ENCODE measurements at regions of chr1 and their contacts with region 1.

Region 1: GRCh38 chr1:112619520-112620376 is at the start of gene CAPZA1:
- DNase-seq: peak; percentile 98
- H3K4me3 ChIP-seq: peak within 1 kb of the TSS; percentile 72 to 92 (median 82)
- H3K27ac ChIP-seq: peak within 1 kb of the TSS; percentile 96 to 100 (median 99)
- H3K4me1 ChIP-seq: peaks cover 40 to 70% (median 60%) of the 10 kb centered on the region in 6 donors
- H3K27me3 ChIP-seq: no peaks in the 10 kb centered on the region
- CTCF ChIP-seq: peak in 1 of 11 experiments; percentile 3
- POLR2A ChIP-seq: peak; percentile 40 to 58 (median 55)
- total RNA-seq, gene CAPZA1: 190 to 354 (median 259) TPM

Region 2: DNA sequence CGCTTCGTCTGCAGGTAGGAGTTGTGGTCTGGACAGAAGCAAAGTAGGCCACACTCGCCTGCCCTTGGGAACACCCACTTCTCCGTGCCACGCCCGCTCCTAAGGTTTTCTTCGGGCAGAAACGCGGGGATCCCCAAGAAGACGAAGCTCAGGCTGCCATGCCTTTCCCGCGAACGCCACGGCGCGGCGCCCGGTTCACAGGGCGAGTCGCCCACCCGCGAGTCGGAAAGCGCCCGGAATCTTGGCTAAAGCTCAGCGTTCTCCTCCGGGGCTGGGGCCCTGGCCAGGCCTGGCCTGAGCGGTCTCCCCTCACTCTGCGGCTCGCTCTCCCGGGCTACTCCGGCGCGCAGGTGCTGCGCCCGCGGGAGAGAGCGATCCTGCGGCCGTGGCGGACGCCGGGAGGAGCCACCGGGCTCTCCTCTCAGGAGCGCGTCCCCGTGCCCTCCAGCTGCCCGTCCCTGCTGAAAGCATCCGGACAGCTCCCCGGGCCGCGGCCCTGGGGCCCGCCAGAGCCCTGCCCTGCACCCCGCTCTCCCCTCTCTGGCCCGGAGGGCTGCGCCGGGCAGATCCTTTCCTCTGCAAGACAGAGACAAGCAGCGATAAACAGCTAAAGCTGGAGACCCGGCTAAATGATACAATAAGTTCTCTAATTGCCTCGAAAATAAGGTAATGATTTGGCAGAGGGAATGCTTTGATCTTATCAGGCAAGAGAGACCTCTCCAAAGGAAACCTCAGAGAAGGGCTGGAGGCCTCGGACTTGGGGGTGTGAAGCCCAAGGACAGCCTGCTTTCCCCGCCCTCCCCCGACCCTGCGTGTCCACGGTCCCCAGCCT is 117.7 kb before region 1 on chr1:
- intact Hi-C with region 1: no loop called
- DNase-seq: peak; percentile 88
- H3K4me3 ChIP-seq: peak overlapping the region; percentile 36 to 74 (median 48)
- H3K27ac ChIP-seq: peak overlapping the region in 1 of 8 donors; percentile 14
- H3K4me1 ChIP-seq: peaks cover 0 to 18% (median 15%) of the 10 kb centered on the region in 6 donors
- H3K27me3 ChIP-seq: peaks cover 0 to 88% (median 20%) of the 10 kb centered on the region in 7 donors
- CTCF ChIP-seq: peak; percentile 30 to 73 (median 59)
- POLR2A ChIP-seq: no peak

Region 3: GRCh38 chr1:112674439-112674985 is 54.8 kb after region 1 on chr1 and contains the start of gene MOV10:
- intact Hi-C with region 1: loop called (anchors 10 kb)
- DNase-seq: peak; percentile 92
- H3K4me3 ChIP-seq: peak within 1 kb of the TSS; percentile 73 to 95 (median 80)
- H3K27ac ChIP-seq: peak within 1 kb of the TSS; percentile 79 to 94 (median 92)
- H3K4me1 ChIP-seq: peaks cover 18 to 60% (median 42%) of the 10 kb centered on the region in 6 donors
- H3K27me3 ChIP-seq: no peaks in the 10 kb centered on the region
- CTCF ChIP-seq: peak in 1 of 11 experiments; percentile 13
- POLR2A ChIP-seq: no peak
- total RNA-seq, gene MOV10: 45.5 to 92.3 (median 60.2) TPM

Region 4: DNA sequence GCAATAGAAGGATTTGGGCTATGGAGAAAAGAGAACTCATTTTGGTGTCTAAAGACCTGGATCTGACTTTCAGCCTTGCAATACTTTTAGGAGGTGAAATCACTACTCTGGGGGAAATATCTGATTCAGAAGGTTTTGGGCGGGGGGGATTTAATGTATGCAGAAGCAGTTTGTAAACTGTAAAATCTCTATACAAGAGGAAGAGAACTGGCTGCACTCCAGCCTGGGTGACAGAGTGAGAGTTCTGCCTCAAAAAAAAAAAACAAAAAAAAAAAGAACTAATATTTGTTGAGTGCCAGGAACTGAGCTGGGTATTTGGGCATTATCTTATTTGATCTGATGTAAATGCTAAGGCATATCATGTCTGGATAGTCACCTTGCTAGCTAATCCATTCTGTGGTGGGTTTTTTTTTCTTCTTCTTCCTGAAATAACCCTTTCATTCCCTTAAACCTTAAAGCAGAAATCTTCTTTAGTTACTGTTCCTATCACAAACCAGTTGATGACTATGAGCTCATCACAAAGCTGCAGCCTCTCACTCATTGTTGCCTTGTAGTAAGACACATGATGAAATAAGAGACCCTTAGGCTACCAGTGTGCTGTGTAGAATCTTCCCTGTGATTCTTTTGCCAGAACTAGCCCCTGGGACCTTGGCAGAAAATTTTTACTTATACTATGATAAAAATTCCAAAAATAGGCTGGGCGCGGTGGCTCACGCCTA is 371.8 kb after region 1 on chr1:
- intact Hi-C with region 1: no loop called
- DNase-seq: no peak
- H3K4me3 ChIP-seq: no peak overlapping the region
- H3K27ac ChIP-seq: no peak overlapping the region
- H3K4me1 ChIP-seq: no peaks in the 10 kb centered on the region
- H3K27me3 ChIP-seq: no peaks in the 10 kb centered on the region
- CTCF ChIP-seq: no peak
- POLR2A ChIP-seq: no peak